Uterus (tissue), 4 donors: ENCODE measurements at regions of chr2 and their contacts with region 1.

Region 1: GRCh38 chr2:121529439-121530211 is 1.1 kb upstream of the RNU4ATAC start:
- DNase-seq: peak; percentile 65 to 67
- H3K4me3 ChIP-seq: peak overlapping the region; percentile 69 to 77
- H3K27ac ChIP-seq: peak overlapping the region; percentile 96 to 99
- H3K4me1 ChIP-seq: peaks cover 0 to 3% of the 10 kb centered on the region in 2 donors
- H3K27me3 ChIP-seq: no peaks in the 10 kb centered on the region
- CTCF ChIP-seq: no peak
- POLR2A ChIP-seq: no peak

Region 2: DNA sequence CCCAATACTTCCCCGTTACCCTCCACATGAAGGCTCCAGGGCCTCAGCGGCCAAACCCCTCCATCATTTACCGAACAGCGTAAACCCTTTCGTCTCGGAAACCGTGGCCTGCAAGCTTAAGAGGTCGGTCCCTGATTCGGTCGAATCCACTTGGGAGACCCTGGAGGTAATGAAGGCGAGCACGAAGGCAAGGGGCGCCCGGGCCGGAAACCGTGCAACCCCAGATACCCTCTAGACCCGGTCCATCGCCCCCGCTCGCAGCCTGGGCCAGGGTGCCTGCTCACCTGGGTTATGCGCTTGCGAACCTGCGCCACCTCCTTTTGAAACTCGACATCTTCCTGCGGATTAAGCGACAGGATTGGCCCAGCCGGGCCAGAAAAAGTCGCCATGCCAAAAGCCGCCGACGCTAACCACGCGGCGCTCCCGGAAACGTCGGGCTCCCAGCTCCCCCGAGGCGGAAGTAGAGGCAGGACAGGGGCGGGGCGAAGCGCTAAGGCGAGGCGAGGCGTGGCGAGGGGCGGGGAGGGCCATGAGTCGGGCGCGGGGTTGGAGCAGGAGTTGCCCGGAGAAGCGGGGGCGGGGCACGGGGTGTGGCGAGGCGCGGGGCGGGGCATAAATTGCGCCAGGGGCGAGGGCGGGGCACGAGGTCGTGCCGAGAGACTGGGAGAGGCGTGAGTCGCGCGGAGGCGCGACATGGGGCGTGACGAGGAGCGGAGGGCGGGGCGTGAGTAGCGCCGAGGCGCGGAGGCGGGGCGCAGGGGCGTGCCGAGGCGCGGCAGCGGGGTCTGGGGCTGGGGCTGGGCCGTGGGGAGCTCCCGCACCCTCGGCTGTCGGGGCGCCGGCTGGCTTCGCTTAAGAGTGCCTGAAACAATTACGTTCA is 207.1 kb after region 1 on chr2 and contains the start of gene NIFK:
- intact Hi-C with region 1: loop called (anchors 10 kb)
- DNase-seq: peak; percentile 99
- H3K4me3 ChIP-seq: peak within 1 kb of the TSS; percentile 98 to 99
- H3K27ac ChIP-seq: peak within 1 kb of the TSS; percentile 78 to 90
- H3K4me1 ChIP-seq: no peaks in the 10 kb centered on the region
- H3K27me3 ChIP-seq: no peaks in the 10 kb centered on the region
- CTCF ChIP-seq: peak in 1 of 4 experiments; percentile 11
- POLR2A ChIP-seq: peak in 1 of 2 donors; percentile 31
- total RNA-seq, gene NIFK: 21.2 to 61.2 (median 39.4) TPM